A673 (cell line): ENCODE measurements at regions of chr10 and their contacts with region 1.

Region 1: GRCh38 chr10:18066947-18067346 is 73.3 kb upstream of the CACNB2 start:
- DNase-seq: no peak
- H3K4me3 ChIP-seq: no peak overlapping the region
- H3K27ac ChIP-seq: no peak overlapping the region
- H3K4me1 ChIP-seq: peaks cover 18% of the 10 kb centered on the region
- H3K27me3 ChIP-seq: no peaks in the 10 kb centered on the region
- CTCF ChIP-seq: no peak

Region 2: GRCh38 chr10:17676919-17677318 is 390.0 kb before region 1 on chr10:
- CTCF ChIA-PET with region 1: no interaction called
- POLR2A ChIA-PET with region 1: interaction called, 10 read pairs
- intact Hi-C with region 1: no loop called
- DNase-seq: no peak
- H3K4me3 ChIP-seq: no peak overlapping the region
- H3K27ac ChIP-seq: no peak overlapping the region
- H3K4me1 ChIP-seq: peaks cover 30% of the 10 kb centered on the region
- H3K27me3 ChIP-seq: no peaks in the 10 kb centered on the region
- CTCF ChIP-seq: no peak

Region 3: GRCh38 chr10:18233775-18234174 is 166.8 kb after region 1 on chr10:
- CTCF ChIA-PET with region 1: no interaction called
- POLR2A ChIA-PET with region 1: no interaction called
- intact Hi-C with region 1: no loop called
- DNase-seq: no peak
- H3K4me3 ChIP-seq: no peak overlapping the region
- H3K27ac ChIP-seq: no peak overlapping the region
- H3K4me1 ChIP-seq: peaks cover 34% of the 10 kb centered on the region
- H3K27me3 ChIP-seq: no peaks in the 10 kb centered on the region
- CTCF ChIP-seq: 0 out of 2 replicates have a peak, but pooled peaks have one; percentile 20

Region 4: DNA sequence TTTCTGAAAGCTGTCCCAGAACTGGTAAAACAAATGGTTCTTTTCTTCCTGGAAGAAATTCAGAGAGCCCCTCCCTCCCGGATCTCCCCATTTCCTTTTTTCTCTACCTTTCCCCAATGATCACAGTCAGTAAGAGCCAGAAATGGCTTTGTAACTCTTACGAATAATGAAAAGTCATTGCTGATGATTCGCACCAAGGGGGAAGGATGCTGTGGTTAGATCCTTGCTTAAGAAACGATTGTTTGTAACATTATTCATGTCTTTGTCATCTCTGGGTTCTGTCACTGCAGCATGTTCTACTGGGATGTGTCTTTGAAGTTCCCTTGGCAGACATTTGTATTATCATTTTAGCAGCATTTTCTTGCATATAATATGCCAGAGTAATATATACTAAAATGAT is 212.2 kb after region 1 on chr10:
- CTCF ChIA-PET with region 1: no interaction called
- POLR2A ChIA-PET with region 1: no interaction called
- intact Hi-C with region 1: no loop called
- DNase-seq: peak; percentile 19
- H3K4me3 ChIP-seq: no peak overlapping the region
- H3K27ac ChIP-seq: no peak overlapping the region
- H3K4me1 ChIP-seq: no peaks in the 10 kb centered on the region
- H3K27me3 ChIP-seq: no peaks in the 10 kb centered on the region
- CTCF ChIP-seq: no peak